ENCODE measurements at regions of chr1 and their contacts with region 1.

Region 1: DNA sequence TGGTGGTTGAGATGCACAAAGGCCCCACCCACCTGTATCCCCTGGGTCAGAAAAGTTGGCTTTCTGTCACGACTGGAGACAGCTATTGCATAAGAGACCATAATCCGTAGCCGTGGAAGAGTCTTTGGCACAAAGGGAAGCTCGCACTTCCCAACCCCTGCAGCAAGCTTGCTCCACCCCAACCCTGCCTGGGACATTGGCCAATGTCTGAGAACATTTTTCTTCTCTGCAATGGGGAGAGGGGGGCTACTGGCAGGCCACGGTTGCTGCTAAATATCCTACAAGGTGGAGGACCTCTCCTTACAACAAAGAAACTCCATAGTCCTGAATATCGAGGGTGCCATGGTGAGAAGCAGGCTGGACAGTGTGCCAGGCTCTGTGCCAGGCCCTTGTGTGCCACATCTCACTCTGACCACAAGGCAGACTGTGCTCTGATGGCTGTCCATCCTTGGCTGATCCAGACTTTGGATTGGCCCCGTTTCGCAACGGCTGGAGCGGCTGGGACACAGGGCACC is 104.1 kb downstream of the CSMD2 start:
- DNase-seq: no peak
- ATAC-seq: no peak
- H3K4me3 Mint-ChIP-seq: no peak overlapping the region
- H3K27ac Mint-ChIP-seq: no peak overlapping the region
- H3K4me1 Mint-ChIP-seq: peaks cover 20% of the 10 kb centered on the region
- H3K27me3 Mint-ChIP-seq: no peaks in the 10 kb centered on the region
- CTCF ChIP-seq: no peak

Region 2: GRCh38 chr1:34037109-34037508 is 23.8 kb before region 1 on chr1:
- CTCF ChIA-PET with region 1: interaction called, 13 read pairs
- POLR2A ChIA-PET with region 1: no interaction called
- DNase-seq: peak; percentile 73
- ATAC-seq: peak; percentile 92
- H3K4me3 Mint-ChIP-seq: no peak overlapping the region
- H3K27ac Mint-ChIP-seq: no peak overlapping the region
- H3K4me1 Mint-ChIP-seq: peaks cover 4% of the 10 kb centered on the region
- H3K27me3 Mint-ChIP-seq: no peaks in the 10 kb centered on the region
- CTCF ChIP-seq: no peak

Region 3: GRCh38 chr1:34050701-34051485 is 10.1 kb before region 1 on chr1:
- CTCF ChIA-PET with region 1: no interaction called
- POLR2A ChIA-PET with region 1: no interaction called
- DNase-seq: no peak
- ATAC-seq: no peak
- H3K4me3 Mint-ChIP-seq: no peak overlapping the region
- H3K27ac Mint-ChIP-seq: no peak overlapping the region
- H3K4me1 Mint-ChIP-seq: peaks cover 5% of the 10 kb centered on the region
- H3K27me3 Mint-ChIP-seq: no peaks in the 10 kb centered on the region; the same call in 1 of the 2 replicates
- CTCF ChIP-seq: no peak

Measured in WTC11 (cell line).